K562 (cell line): ENCODE measurements at regions of chr11 and their contacts with region 1.

Region 1: GRCh38 chr11:66677599-66678375 is at the start of gene RBM4B:
- DNase-seq: peak; percentile 98 to 99 (median 98)
- ATAC-seq: peak; percentile 97
- H3K4me3 ChIP-seq: peak within 1 kb of the TSS; percentile 59
- H3K27ac ChIP-seq: peak within 1 kb of the TSS; percentile 93
- H3K4me1 ChIP-seq: peaks cover 21 to 31% of the 10 kb centered on the region in 2 experiments; a peak in 4 of 5 replicates
- H3K27me3 ChIP-seq: no peaks in the 10 kb centered on the region
- CTCF ChIP-seq: 0 out of 6 replicates have a peak, but pooled peaks of 1 of the 3 experiments have one; percentile 0
- EP300 ChIP-seq: no peak
- POLR2A ChIP-seq: peak; percentile 87
- RAD21 ChIP-seq: no peak
- polyA plus RNA-seq, gene RBM4B: 29.7 to 32.3 TPM

Region 2: GRCh38 chr11:66429983-66430602 is 247.7 kb before region 1 on chr11:
- CTCF ChIA-PET with region 1: interaction called, 11 read pairs
- POLR2A ChIA-PET with region 1: interaction called, 4 read pairs
- in situ Hi-C with region 1: no loop called
- intact Hi-C with region 1: loop called (anchors 5 kb)
- DNase-seq: peak; percentile 73 to 84 (median 75)
- ATAC-seq: peak; percentile 97
- H3K4me3 ChIP-seq: no peak overlapping the region
- H3K27ac ChIP-seq: no peak overlapping the region
- H3K4me1 ChIP-seq: peaks cover 3 to 5% of the 10 kb centered on the region in 2 experiments; a peak in 3 of 5 replicates
- H3K27me3 ChIP-seq: no peaks in the 10 kb centered on the region
- CTCF ChIP-seq: peak; percentile 88 to 91 (median 91)
- EP300 ChIP-seq: no peak
- POLR2A ChIP-seq: no peak
- RAD21 ChIP-seq: peak; percentile 64 to 76

Region 3: GRCh38 chr11:66480117-66480938 is 197.5 kb before region 1 on chr11 and contains the start of gene DPP3:
- CTCF ChIA-PET with region 1: interaction called, 5 read pairs
- POLR2A ChIA-PET with region 1: interaction called, 11 read pairs
- in situ Hi-C with region 1: no loop called
- intact Hi-C with region 1: loop called (anchors 5 kb)
- DNase-seq: peak; percentile 98 to 100 (median 99)
- ATAC-seq: peak; percentile 98
- H3K4me3 ChIP-seq: peak within 1 kb of the TSS; percentile 65
- H3K27ac ChIP-seq: peak within 1 kb of the TSS; percentile 92
- H3K4me1 ChIP-seq: peaks cover 3 to 31% of the 10 kb centered on the region in 2 experiments; a peak in 4 of 5 replicates
- H3K27me3 ChIP-seq: no peaks in the 10 kb centered on the region
- CTCF ChIP-seq: no peak
- EP300 ChIP-seq: no peak
- POLR2A ChIP-seq: peak; percentile 94
- RAD21 ChIP-seq: 0 out of 4 replicates have a peak, but pooled peaks of 1 of the 2 experiments have one; percentile 6
- polyA plus RNA-seq, gene DPP3: 3.7 to 6.2 TPM

Region 4: GRCh38 chr11:66592457-66593302 is 85.1 kb before region 1 on chr11 and contains the starts of genes CCDC87 and CCS:
- CTCF ChIA-PET with region 1: no interaction called
- POLR2A ChIA-PET with region 1: interaction called, 3 read pairs
- in situ Hi-C with region 1: no loop called
- intact Hi-C with region 1: loop called (anchors 5 kb)
- DNase-seq: peak; percentile 97 to 100 (median 100)
- ATAC-seq: peak; percentile 96
- H3K4me3 ChIP-seq: peak within 1 kb of the TSS; percentile 75
- H3K27ac ChIP-seq: peak within 1 kb of the TSS; percentile 75
- H3K4me1 ChIP-seq: peaks cover 32 to 51% of the 10 kb centered on the region in 2 experiments
- H3K27me3 ChIP-seq: no peaks in the 10 kb centered on the region
- CTCF ChIP-seq: peak; percentile 96 to 99 (median 99)
- EP300 ChIP-seq: no peak
- POLR2A ChIP-seq: peak; percentile 94
- RAD21 ChIP-seq: peak; percentile 51 to 56; a peak in 3 of 4 replicates
- polyA plus RNA-seq, gene CCDC87: 0.03 TPM in 1 of 2 experiments, not detected in the other
- polyA plus RNA-seq, gene CCS: 1.1 to 3.0 TPM

Region 5: DNA sequence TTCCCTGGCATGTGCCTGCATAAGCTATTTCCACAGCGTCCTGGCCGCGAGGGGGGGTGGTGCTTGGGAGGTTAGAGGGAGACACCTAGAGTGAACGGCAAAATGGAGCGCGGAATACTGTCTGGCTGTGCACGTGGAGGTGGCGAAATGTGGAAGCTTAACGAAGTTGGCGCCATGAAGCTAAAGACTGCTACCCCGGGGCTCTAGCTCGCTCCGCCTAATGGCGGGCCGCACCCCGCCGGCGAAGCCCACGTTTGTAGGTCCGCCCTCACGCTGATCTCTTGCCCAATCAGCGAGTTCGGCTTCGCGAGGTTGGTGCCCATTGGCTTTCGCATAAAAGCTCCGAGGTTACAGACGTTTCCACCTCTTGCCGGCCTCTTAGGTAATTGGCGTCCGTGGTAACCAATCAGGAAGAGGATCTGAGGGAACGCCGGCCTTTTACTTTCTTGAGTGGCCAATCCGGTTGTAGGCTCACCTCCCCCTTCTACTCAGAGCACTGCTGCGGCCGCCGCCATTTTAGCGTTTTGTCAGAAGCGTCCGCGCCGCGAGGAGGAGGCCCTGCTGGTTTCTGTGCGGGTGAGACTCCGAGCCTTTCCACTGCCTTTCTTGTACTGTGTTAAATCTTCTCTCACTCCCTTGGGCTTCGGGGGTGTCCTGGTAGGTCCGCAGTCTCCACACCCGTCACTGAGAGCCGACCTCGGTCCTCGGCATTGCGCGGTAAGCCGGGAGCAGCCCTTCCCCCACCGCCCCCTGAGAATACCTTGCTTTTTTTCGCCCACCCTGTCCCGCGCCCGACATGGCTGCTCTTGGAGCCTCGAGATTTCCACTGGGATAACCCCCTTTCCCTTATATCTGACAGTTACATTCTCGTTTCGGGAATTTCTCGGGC is 39.4 kb before region 1 on chr11 and contains the start of gene RBM4:
- CTCF ChIA-PET with region 1: no interaction called
- POLR2A ChIA-PET with region 1: interaction called, 18 read pairs
- in situ Hi-C with region 1: no loop called
- intact Hi-C with region 1: no loop called
- DNase-seq: peak; percentile 95 to 100 (median 98)
- ATAC-seq: peak; percentile 95
- H3K4me3 ChIP-seq: peak within 1 kb of the TSS; percentile 73
- H3K27ac ChIP-seq: peak within 1 kb of the TSS; percentile 96
- H3K4me1 ChIP-seq: peaks cover 18 to 24% of the 10 kb centered on the region in 2 experiments
- H3K27me3 ChIP-seq: no peaks in the 10 kb centered on the region
- CTCF ChIP-seq: peak in 1 of 3 experiments; percentile 28; a peak in 1 of 6 replicates
- EP300 ChIP-seq: no peak
- POLR2A ChIP-seq: peak; percentile 96
- RAD21 ChIP-seq: no peak; a peak in 1 of 4 replicates
- polyA plus RNA-seq, gene RBM4: 223 to 233 TPM

Region 6: GRCh38 chr11:66950113-66950535 is 272.3 kb after region 1 on chr11:
- CTCF ChIA-PET with region 1: no interaction called
- POLR2A ChIA-PET with region 1: no interaction called
- in situ Hi-C with region 1: no loop called
- intact Hi-C with region 1: no loop called
- DNase-seq: peak; percentile 77 to 86 (median 79)
- ATAC-seq: peak; percentile 89
- H3K4me3 ChIP-seq: no peak overlapping the region
- H3K27ac ChIP-seq: peak overlapping the region; percentile 72; the same call in 2 of the 3 replicates
- H3K4me1 ChIP-seq: peaks cover 0 to 10% of the 10 kb centered on the region in 2 experiments; a peak in 3 of 5 replicates
- H3K27me3 ChIP-seq: no peaks in the 10 kb centered on the region
- CTCF ChIP-seq: no peak
- EP300 ChIP-seq: peak; percentile 68
- POLR2A ChIP-seq: no peak
- RAD21 ChIP-seq: no peak